ENCODE measurements at regions of chr17 and their contacts with region 1.

Region 1: DNA sequence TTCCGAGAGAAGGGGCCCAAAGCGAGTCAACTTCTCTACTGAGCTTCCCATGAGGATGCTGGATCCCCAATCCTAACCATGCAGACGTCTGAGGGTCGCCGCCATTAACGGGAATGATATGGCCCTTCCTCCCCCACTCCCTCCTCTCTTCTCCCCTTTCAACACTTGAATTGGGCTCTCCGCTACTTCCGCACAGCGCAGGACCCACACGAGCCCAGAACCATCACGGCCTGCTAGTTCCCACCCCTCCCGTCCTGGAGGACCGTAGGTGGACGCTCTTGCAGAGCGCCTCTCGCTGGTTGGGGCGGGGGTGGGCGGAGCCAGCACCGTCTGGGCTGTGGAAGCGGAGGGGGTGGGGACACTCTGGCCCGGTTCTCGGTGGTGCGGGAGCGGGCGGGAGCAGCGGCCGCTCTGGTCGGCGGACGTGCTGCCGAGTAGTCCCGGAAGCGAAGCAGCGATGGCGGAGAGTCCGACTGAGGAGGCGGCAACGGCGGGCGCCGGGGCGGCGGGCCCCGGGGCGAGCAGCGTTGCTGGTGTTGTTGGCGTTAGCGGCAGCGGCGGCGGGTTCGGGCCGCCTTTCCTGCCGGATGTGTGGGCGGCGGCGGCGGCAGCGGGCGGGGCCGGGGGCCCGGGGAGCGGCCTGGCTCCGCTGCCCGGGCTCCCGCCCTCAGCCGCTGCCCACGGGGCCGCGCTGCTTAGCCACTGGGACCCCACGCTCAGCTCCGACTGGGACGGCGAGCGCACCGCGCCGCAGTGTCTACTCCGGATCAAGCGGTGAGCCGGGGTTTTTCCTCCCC is at the start of gene UBE2Z:
- DNase-seq: peak; percentile 98
- H3K27ac ChIP-seq: peak within 1 kb of the TSS; percentile 95
- CTCF ChIP-seq: no peak; the same call in 1 of the 2 replicates

Region 2: GRCh38 chr17:48892940-48893645 is 15.2 kb before region 1 on chr17:
- CTCF ChIA-PET with region 1: interaction called, 5 read pairs
- POLR2A ChIA-PET with region 1: interaction called, 11 read pairs
- DNase-seq: no peak
- H3K27ac ChIP-seq: peak overlapping the region; percentile 85
- CTCF ChIP-seq: no peak

Measured in RWPE1 (cell line).